ENCODE measurements at regions of chr3 and their contacts with region 1.

Region 1: DNA sequence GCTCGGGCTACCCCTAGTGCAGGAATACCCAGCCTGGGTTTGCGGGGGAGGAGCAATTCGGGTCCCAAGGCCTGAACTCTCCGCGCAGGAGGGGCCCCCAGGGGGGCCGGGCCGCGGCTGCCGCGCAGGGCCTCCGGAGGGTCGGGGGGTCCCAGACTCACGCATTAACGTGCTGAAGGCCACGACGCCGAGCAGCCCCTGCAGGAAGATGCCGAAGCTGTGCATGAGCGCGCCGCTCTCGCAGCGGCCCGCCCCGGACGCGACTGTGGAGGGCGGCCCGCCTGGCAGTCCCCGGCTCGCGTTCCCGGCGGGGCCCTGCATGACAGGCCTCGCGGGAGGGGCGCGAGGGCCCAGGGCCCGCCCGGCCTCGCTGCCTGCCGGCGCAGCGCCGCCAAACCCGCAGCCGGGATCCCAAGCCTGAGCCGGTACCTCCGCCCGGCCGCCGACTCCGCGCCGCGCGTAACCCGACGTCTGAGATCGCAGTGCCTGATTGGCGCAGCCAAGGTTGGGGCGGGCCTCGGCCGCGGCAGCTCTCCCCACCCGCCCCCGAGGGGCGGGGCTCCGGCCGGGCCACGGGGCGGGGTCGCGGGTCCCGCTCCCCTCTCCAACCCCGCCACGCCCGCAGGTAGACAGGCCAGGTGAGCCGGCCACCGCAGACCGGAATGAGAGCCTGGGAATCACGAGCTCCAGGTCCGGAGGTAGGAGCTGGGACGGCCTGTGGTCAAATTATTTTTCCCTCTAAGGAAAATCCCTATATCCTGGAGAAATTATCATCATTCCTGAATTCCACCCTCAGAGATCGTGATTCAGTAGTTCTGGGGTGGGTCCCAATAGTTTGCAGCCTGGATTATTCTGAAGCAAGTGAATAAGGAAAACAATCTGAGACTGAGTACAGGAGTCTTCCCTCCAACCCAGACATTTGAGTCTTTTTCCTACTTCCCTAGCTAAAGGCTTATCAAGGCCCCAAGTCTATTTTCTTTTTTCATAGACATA is at the start of gene STIMATE:
- DNase-seq: peak; percentile 90
- H3K4me3 ChIP-seq: peak within 1 kb of the TSS; percentile 89
- H3K27ac ChIP-seq: no peak within 1 kb of the TSS
- H3K4me1 ChIP-seq: peaks cover 19% of the 10 kb centered on the region
- CTCF ChIP-seq: no peak
- total RNA-seq, gene STIMATE: 8.1 and 18.1 TPM in 2 replicates

Region 2: DNA sequence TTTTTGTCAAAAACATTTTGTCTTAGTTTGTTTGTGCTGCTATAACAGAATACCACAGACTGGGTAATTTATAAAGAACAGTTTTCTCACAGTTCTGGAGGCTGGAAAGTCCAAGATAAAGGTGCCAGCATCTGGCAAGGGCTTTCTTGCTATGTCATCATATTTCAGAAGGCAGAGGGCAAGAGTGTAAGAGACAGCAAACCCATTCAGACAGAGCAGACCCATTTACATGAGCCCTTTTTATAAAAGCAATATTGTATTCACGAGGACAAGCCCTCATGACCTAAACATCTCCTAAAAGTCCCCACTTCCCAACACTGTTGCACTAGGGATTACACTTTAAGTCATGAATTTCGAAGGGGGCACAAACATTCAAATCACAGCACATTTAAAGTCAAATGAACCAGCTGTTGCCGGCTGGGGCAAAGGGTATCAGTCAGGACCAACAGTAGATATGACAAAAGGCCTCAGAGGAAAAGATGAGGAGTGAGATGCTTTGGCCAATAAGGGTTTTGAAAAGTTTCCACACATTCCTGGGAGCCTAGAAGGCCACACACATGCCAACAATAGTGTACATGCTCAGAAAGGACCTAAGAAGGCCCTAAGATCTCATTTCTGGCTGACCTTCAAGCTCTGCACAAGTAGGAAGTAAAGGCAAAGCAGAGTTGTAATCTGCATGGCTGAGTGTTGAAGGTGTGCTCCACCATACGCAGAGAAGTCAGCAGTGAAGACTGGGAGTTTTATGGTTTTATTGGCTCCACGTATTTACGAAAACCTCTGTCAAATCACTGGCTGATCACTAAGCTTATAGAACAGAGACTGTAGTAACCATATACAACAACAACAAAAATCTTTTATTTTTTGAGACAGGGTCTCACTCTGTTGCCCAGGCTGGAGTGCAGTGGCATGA is 323.1 kb before region 1 on chr3:
- CTCF ChIA-PET with region 1: no interaction called
- POLR2A ChIA-PET with region 1: no interaction called
- intact Hi-C with region 1: no loop called
- DNase-seq: no peak
- H3K4me3 ChIP-seq: no peak overlapping the region
- H3K27ac ChIP-seq: no peak overlapping the region
- H3K4me1 ChIP-seq: no peaks in the 10 kb centered on the region
- CTCF ChIP-seq: no peak

Region 3: DNA sequence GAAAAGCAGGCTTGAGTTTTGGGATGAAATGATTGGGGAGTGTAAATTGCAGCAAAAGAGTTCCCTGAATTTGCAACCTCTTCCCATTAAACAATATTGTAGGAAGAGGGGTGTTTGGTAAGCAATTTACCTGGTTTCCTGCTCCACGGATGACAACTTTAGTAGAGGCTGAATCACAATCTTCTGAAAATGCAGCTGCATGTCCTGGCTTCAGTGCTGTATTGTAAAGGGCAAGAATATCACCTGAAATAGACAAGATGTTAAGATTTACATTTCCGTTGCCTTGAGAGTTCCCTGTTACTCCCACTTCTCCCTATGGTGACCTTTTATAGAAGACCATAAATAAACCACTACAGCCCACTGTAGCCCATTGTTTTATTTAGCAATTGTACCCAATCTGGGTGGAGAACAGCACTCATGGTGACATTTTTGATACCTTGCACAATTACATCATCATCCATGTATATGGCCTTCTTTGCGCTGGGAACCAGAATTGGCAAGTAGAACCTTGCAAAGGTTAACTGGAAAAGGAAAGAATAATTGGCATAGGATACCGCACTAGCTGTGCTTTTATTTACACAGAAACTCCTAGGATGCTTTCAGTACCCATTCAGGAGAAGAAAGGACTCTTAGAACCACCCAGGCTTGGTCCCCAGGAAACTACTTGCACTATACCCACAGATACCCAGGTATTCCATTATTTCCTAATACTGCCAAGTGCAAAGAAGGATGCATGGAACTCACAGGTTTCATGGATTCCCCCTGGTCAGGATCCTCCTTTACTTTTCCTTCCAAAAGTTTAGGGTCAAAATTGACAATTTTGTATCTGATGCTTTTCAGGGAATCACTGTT is 201.4 kb before region 1 on chr3:
- CTCF ChIA-PET with region 1: no interaction called
- POLR2A ChIA-PET with region 1: interaction called, 10 read pairs
- intact Hi-C with region 1: no loop called
- DNase-seq: no peak
- H3K4me3 ChIP-seq: no peak overlapping the region
- H3K27ac ChIP-seq: peak overlapping the region; percentile 34
- H3K4me1 ChIP-seq: peaks cover 14% of the 10 kb centered on the region
- CTCF ChIP-seq: no peak